K562 (cell line): ENCODE measurements at regions of chr11 and their contacts with region 1.

Region 1: DNA sequence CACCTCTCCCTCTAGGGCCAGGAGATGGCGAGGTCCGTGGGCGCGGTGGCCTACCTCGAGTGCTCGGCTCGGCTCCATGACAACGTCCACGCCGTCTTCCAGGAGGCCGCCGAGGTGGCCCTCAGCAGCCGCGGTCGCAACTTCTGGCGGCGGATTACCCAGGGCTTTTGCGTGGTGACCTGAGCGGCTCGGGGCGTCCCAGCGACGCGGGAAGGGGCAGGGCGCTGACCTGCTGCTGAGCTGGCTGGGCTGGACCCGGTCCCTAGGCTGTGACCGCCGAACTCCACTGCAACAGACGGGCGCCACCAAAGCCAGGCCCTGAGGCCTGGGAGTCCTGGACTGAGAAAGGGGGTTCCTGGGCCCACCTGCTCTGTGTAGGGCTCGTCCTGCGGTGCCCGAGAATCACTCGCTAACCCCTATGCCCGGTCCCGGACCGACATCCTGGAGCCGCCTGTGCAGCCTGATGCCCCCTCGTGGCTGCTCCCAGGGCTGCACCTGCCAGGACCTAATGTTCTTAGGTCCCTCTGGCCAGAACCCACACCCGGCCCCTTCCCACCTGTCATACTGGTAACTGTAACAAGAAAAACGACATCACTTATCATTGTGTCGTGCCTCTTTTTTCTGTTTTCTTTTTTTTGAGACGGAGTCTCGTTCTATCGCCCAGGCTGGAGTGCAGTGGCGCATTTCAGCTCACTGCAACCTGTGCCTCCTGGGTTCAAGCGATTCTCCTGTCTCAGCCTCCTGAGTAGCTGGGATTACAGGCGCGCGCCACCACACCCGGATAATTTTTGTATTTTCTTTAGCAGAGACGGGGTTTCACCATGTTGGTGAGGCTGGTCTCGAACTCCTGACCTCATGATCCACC is 15.0 kb downstream of the RHOD start:
- DNase-seq: peak; percentile 72 to 90 (median 88)
- ATAC-seq: peak; percentile 91
- H3K4me3 ChIP-seq: no peak overlapping the region
- H3K27ac ChIP-seq: no peak overlapping the region
- H3K4me1 ChIP-seq: peaks cover 0 to 16% of the 10 kb centered on the region in 2 experiments; a peak in 3 of 5 replicates
- H3K27me3 ChIP-seq: peaks cover 0 to 11% of the 10 kb centered on the region in 2 experiments; a peak in 2 of 5 replicates
- CTCF ChIP-seq: peak; percentile 79 to 86 (median 83)
- EP300 ChIP-seq: no peak
- POLR2A ChIP-seq: no peak
- RAD21 ChIP-seq: peak; percentile 23 to 63; a peak in 2 of 4 replicates

Region 2: DNA sequence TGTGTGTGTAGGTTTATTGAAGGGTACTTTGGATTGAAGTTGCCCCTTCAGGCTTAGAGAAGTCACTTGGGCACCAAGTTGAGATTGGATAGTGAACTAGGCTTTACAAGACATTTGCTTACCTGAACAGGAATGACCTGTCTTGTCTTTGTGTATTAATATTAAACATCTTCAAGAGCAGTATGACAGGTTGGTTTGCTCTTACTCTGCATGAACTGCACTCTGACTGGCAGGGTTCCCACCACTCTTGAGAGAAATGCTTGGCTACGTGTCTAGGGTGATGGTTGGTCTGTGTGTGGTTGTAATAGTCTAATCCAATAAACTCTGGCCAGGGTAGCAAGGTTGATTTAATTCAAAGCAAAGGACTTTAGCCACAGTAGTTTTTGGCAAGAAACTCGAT is 322.6 kb before region 1 on chr11:
- CTCF ChIA-PET with region 1: no interaction called
- POLR2A ChIA-PET with region 1: no interaction called
- in situ Hi-C with region 1: no loop called
- intact Hi-C with region 1: no loop called
- DNase-seq: no peak
- ATAC-seq: no peak
- H3K4me3 ChIP-seq: no peak overlapping the region
- H3K27ac ChIP-seq: no peak overlapping the region
- H3K4me1 ChIP-seq: peaks cover 0 to 22% of the 10 kb centered on the region in 2 experiments; a peak in 2 of 5 replicates
- H3K27me3 ChIP-seq: no peaks in the 10 kb centered on the region
- CTCF ChIP-seq: no peak
- EP300 ChIP-seq: no peak
- POLR2A ChIP-seq: no peak
- RAD21 ChIP-seq: no peak

Region 3: GRCh38 chr11:67053896-67054842 is 17.5 kb before region 1 on chr11:
- CTCF ChIA-PET with region 1: interaction called, 3 read pairs
- POLR2A ChIA-PET with region 1: interaction called, 4 read pairs
- in situ Hi-C with region 1: no loop called
- intact Hi-C with region 1: loop called (anchors 2 kb)
- DNase-seq: peak; percentile 76 to 90 (median 87)
- ATAC-seq: peak; percentile 93
- H3K4me3 ChIP-seq: no peak overlapping the region
- H3K27ac ChIP-seq: no peak overlapping the region
- H3K4me1 ChIP-seq: peaks cover 26 to 36% of the 10 kb centered on the region in 2 experiments
- H3K27me3 ChIP-seq: no peaks in the 10 kb centered on the region
- CTCF ChIP-seq: peak; percentile 82 to 91 (median 84)
- EP300 ChIP-seq: no peak
- POLR2A ChIP-seq: no peak
- RAD21 ChIP-seq: peak; percentile 49 to 84

Region 4: GRCh38 chr11:67146516-67147226 is 75.0 kb after region 1 on chr11:
- CTCF ChIA-PET with region 1: no interaction called
- POLR2A ChIA-PET with region 1: no interaction called
- in situ Hi-C with region 1: no loop called
- intact Hi-C with region 1: no loop called
- DNase-seq: no peak
- ATAC-seq: no peak
- H3K4me3 ChIP-seq: no peak overlapping the region
- H3K27ac ChIP-seq: no peak overlapping the region
- H3K4me1 ChIP-seq: no peaks in the 10 kb centered on the region
- H3K27me3 ChIP-seq: no peaks in the 10 kb centered on the region
- CTCF ChIP-seq: no peak
- EP300 ChIP-seq: no peak
- POLR2A ChIP-seq: no peak
- RAD21 ChIP-seq: no peak